ENCODE measurements at regions of chr10 and their contacts with region 1.

Region 1: GRCh38 chr10:28393966-28394568 is 91.2 kb upstream of the MPP7 start:
- DNase-seq: peak; percentile 72
- H3K4me3 ChIP-seq: no peak overlapping the region
- H3K27ac ChIP-seq: no peak overlapping the region
- H3K4me1 ChIP-seq: peaks cover 0 to 10% (median 0%) of the 10 kb centered on the region in 4 donors
- H3K27me3 ChIP-seq: no peaks in the 10 kb centered on the region
- CTCF ChIP-seq: peak; percentile 72 to 94 (median 90)
- EP300 ChIP-seq: no peak
- POLR2A ChIP-seq: no peak

Region 2: GRCh38 chr10:27440478-27440877 is 953.6 kb before region 1 on chr10:
- in situ Hi-C with region 1: no loop called
- intact Hi-C with region 1: loop called (anchors 5 kb)
- DNase-seq: no peak
- H3K4me3 ChIP-seq: no peak overlapping the region
- H3K27ac ChIP-seq: no peak overlapping the region
- H3K4me1 ChIP-seq: no peaks in the 10 kb centered on the region
- H3K27me3 ChIP-seq: no peaks in the 10 kb centered on the region
- CTCF ChIP-seq: no peak
- EP300 ChIP-seq: no peak
- POLR2A ChIP-seq: no peak

Region 3: DNA sequence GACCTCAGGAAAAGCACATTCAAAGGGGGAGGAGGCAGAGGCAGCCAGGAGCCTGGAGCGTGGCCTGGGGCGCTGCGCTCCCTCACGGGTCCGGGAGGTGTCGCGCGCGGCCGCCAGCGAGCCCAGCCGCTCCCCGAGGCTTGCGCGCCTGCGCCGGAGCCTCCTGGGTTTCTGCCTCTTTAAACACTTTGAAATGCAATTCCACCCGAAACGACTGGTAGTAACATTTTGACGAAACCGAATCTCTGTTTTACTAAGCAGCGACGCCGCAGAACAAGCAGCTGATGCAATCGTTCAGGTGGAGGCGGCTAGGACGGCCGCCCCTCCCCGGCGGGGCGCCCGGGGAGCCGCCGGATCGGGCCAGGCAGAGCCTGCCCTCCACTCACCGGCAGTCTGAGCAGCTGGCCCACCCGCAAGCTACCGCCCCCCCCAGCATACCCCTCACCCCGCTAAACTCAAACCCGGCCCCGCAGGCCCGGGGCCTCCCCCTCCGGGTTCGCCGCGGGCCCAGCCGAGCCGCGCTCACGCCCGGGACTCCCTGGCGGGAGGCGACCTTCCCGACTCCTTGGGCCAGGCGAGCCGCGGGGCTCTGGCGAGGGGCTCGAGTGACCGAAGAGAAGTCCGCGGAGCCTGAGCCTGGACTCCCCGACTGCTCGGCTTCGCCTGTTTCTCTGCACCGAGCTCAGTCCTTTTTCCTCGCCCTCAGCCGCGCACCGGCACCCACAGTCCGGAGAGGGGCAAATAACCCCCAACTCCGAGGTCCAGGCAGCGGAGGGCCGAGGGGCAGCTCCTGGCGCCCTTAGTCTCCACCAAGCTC is 651.7 kb before region 1 on chr10:
- in situ Hi-C with region 1: loop called in 3 of 4 experiments (anchors 25 kb)
- intact Hi-C with region 1: loop called (anchors 10 kb)
- DNase-seq: peak; percentile 81
- H3K4me3 ChIP-seq: peak overlapping the region; percentile 39 to 95 (median 60)
- H3K27ac ChIP-seq: peak overlapping the region; percentile 83 to 87 (median 85)
- H3K4me1 ChIP-seq: peaks cover 0 to 52% (median 43%) of the 10 kb centered on the region in 4 donors
- H3K27me3 ChIP-seq: peaks cover 85% of the 10 kb centered on the region
- CTCF ChIP-seq: peak; percentile 70 to 84 (median 77)
- EP300 ChIP-seq: no peak
- POLR2A ChIP-seq: no peak

Measured in transverse colon (tissue), 4 donors.